ENCODE measurements at regions of chr1 and their contacts with region 1.

Region 1: GRCh38 chr1:198937231-198938031 is 298.6 kb downstream of the PTPRC start:
- DNase-seq: peak in 9 of 10 donors; percentile 47 to 84 (median 56)
- H3K4me3 ChIP-seq: peak overlapping the region; percentile 51 to 97 (median 78)
- H3K27ac ChIP-seq: peak overlapping the region; percentile 41 to 97 (median 90)
- H3K27me3 ChIP-seq: no peaks in the 10 kb centered on the region
- CTCF ChIP-seq: peak in 23 of 56 donors; percentile 6 to 53 (median 28)

Region 2: DNA sequence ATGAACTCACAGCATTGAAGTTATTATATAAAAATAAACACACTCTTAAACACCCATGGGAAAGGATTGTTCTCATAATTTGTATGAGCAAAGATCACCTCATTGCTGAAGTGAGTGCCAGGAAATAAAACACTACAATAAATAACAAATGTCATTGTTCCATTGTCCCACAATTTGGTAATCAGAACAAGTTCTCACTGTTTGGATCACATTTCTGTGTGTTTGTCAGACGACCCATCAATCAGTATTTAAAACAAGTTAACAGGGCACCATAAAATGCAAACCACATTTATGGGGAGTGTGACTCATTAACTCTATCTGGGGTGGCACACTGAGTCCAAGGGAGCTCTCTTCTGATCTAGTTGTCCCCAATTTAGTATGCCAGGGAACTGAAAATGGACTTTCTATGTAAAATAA is 174.1 kb before region 1 on chr1:
- intact Hi-C with region 1: loop called in 1 of 2 experiments (anchors 2 kb)
- DNase-seq: no peak
- H3K4me3 ChIP-seq: peak overlapping the region in 17 of 59 donors; percentile 1 to 37 (median 17)
- H3K27ac ChIP-seq: peak overlapping the region in 48 of 59 donors; percentile 1 to 80 (median 54)
- H3K27me3 ChIP-seq: no peaks in the 10 kb centered on the region
- CTCF ChIP-seq: peak in 1 of 56 donors; percentile 13

Region 3: GRCh38 chr1:198771563-198772153 is 165.8 kb before region 1 on chr1:
- intact Hi-C with region 1: loop called in 1 of 2 experiments (anchors 10 kb)
- DNase-seq: no peak
- H3K4me3 ChIP-seq: no peak overlapping the region
- H3K27ac ChIP-seq: no peak overlapping the region
- H3K27me3 ChIP-seq: no peaks in the 10 kb centered on the region
- CTCF ChIP-seq: peak; percentile 1 to 78 (median 60)

Region 4: DNA sequence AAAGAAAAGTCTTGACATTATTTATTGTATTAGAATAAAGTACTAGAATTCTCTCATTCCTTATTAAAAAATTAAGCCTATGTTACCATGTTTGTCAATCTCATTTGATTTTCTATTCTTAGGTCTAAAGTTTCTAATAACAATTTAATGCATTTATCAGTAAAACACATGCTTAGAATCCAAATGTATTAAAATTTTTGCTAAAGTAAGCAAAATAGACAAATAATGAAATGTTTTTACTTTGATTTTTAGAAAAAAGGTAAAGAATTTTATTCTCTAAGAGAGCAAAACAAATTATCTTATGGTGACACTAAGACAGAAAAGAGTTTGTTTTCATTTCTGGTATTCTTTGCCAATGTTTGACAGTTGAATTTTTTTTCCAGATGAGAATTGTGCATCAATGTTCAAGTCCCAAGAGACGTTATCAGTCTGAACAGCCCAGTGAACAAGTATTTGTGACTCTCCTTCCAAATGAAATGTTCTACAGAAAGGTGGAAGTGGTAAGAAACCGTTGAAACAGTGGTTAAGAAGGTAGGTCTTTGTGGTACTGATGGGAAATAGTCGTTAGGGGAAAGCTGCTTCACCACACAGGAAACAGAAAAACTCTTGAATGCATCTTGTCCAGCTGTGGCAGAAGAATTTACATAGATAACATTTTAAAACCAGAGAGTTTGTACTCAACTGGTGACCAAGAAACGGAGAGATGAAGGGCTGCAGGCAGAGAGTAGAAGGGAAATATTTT is 103.9 kb after region 1 on chr1:
- intact Hi-C with region 1: no loop called
- DNase-seq: no peak
- H3K4me3 ChIP-seq: peak overlapping the region in 4 of 59 donors; percentile 0 to 10 (median 4)
- H3K27ac ChIP-seq: peak overlapping the region in 1 of 59 donors; percentile 15
- H3K27me3 ChIP-seq: no peaks in the 10 kb centered on the region
- CTCF ChIP-seq: no peak

Region 5: GRCh38 chr1:199081739-199082138 is 144.3 kb after region 1 on chr1:
- intact Hi-C with region 1: loop called (anchors 2 kb)
- DNase-seq: no peak
- H3K4me3 ChIP-seq: peak overlapping the region in 4 of 59 donors; percentile 1 to 22 (median 12)
- H3K27ac ChIP-seq: peak overlapping the region in 58 of 59 donors; percentile 56 to 99 (median 93)
- H3K27me3 ChIP-seq: no peaks in the 10 kb centered on the region
- CTCF ChIP-seq: no peak

Region 6: DNA sequence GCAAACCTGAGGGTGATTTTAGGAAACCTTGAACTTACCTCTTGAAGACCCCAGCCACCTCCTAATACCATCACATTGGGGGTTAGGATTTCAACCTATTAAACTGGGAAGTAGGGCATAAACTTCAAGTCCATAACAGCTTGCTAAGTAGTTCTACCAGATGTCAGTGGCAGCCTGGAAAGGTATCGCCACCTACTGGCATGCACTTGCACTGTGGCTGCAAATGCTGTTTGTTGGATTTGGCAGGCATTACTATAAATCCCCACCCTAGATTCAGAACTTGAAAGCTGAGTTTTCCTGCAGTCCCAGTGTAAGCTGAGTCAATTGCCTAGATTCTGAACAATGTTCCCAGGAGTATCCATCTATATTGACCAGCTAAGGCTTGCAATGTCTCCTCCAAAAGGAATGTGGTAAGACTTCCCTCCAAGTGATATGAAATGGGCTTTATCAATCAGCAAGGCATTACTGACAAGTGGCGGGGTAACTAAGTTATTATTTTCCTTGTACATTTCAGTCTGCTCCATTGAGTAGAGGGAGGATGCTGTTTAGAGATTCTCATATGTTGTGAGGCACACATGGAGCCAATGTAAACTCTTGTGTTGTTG is 175.9 kb after region 1 on chr1:
- intact Hi-C with region 1: loop called (anchors 5 to 10 kb)
- DNase-seq: peak in 9 of 10 donors; percentile 34 to 86 (median 62)
- H3K4me3 ChIP-seq: no peak overlapping the region
- H3K27ac ChIP-seq: peak overlapping the region in 31 of 59 donors; percentile 10 to 75 (median 39)
- H3K27me3 ChIP-seq: no peaks in the 10 kb centered on the region
- CTCF ChIP-seq: peak in 54 of 56 donors; percentile 48 to 87 (median 70)

Region 7: DNA sequence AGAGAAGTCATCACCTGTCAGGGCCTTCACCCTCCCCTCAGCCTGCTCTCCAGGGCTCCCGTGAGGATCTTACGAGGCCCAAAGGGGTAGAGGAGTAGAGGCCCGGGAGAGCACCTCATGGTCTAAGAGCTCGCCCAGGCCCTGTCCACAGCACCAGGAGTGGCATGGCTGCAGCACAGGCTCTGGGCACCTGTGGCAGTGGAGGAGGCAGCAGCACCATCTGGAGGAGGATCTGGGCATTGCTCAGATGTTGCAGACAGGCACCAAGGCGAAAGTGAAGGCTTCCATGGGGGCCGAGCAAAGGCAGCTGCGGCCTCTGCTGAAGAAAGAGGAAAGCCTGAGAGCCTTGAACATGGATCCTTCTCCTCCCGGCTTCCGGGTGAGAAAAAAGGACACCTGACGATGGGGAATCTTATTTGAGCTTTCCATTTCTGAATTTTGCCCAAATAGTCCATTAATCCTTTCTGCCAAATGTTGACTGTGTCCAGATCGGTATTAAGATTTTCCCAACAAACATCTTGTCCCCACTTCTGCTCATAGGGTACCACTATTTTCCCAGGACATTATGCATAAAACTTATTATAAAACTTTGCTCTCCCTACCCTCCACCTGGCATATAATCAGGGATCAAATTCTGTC is 306.1 kb after region 1 on chr1:
- intact Hi-C with region 1: loop called in 1 of 2 experiments (anchors 5 kb)
- DNase-seq: peak; percentile 7 to 82 (median 71)
- H3K4me3 ChIP-seq: peak overlapping the region in 4 of 59 donors; percentile 19 to 32 (median 26)
- H3K27ac ChIP-seq: peak overlapping the region in 7 of 59 donors; percentile 3 to 39 (median 17)
- H3K27me3 ChIP-seq: peaks cover 0 to 4% (median 0%) of the 10 kb centered on the region in 45 donors
- CTCF ChIP-seq: peak in 54 of 56 donors; percentile 35 to 91 (median 70)